Gastrocnemius medialis (tissue), 4 donors: ENCODE measurements at regions of chr1 and their contacts with region 1.

Region 1: DNA sequence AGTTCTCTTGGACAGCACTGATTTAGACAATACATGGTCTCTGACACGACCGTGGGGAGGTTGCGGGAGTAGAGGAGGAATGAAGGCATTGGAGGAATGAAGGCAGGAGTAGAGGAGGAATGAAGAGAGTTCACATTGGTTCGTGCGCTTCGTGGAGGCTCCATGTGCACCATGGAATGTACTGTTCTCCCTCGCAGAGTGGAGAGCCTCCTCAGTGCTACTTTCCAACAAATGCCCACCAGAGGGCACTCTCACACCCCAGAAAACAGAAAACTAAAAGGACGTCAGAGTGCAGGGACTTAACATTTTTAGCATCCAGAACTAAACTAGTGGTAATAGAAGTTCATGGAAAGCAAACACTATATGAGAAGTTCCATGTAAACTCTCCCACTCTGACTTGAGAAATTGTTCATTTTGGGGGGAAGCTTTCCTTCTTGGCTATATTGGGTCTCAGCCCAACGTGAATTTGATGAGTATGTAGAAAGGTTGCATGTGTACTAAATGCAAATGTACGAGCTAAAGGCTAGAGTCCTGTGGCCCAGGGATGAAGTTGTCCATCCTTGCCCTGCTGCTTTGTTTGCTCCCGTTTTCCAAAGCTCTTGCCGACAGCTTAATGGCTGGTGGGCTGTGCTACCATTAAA is 211.6 kb downstream of the LMX1A start:
- DNase-seq: peak in 1 of 2 donors; percentile 16
- ATAC-seq: peak; percentile 72 to 80
- H3K4me3 ChIP-seq: no peak overlapping the region
- H3K27ac ChIP-seq: no peak overlapping the region
- H3K4me1 ChIP-seq: no peaks in the 10 kb centered on the region
- H3K27me3 ChIP-seq: peaks cover 0 to 13% (median 0%) of the 10 kb centered on the region in 3 donors
- CTCF ChIP-seq: peak; percentile 39 to 73 (median 52)
- POLR2A ChIP-seq: no peak

Region 2: GRCh38 chr1:165290148-165290547 is 145.3 kb after region 1 on chr1:
- in situ Hi-C with region 1: no loop called
- intact Hi-C with region 1: loop called (anchors 10 kb)
- DNase-seq: no peak
- ATAC-seq: peak in 1 of 2 donors; percentile 55
- H3K4me3 ChIP-seq: no peak overlapping the region
- H3K27ac ChIP-seq: no peak overlapping the region
- H3K4me1 ChIP-seq: no peaks in the 10 kb centered on the region
- H3K27me3 ChIP-seq: peaks cover 0 to 13% (median 0%) of the 10 kb centered on the region in 3 donors
- CTCF ChIP-seq: no peak
- POLR2A ChIP-seq: no peak